CD4-positive, alpha-beta memory T cell (primary cell): ENCODE measurements at regions of chr3 and their contacts with region 1.

Region 1: DNA sequence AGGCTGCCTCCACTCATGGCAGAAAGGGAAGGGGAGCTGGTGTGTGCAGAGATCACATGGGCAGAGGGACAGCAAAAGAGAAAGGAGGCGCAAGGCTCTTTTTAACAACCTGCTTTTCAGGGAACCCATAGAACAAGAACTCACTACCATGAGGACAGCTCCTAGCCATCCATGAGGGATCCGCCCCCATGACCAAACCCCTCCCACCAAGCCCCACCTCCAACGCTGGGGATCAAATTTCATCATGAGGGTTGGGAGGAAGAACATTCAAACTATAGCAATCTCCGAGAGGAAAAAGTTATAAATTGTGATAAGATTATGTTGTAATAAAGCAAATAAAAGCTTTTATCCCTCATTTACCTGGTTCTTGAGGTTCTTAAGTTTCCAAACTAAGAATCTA is 84.7 kb upstream of the LMCD1 start:
- DNase-seq: no peak
- H3K4me3 ChIP-seq: no peak overlapping the region
- H3K4me3 Mint-ChIP-seq: peak overlapping the region in 1 of 8 donors; percentile 7
- H3K27ac ChIP-seq: no peak overlapping the region
- H3K27ac Mint-ChIP-seq: peak overlapping the region in 3 of 7 donors; percentile 39 to 77 (median 48)
- H3K4me1 ChIP-seq: peaks cover 8% of the 10 kb centered on the region
- H3K4me1 Mint-ChIP-seq: peaks cover 6 to 10% (median 6%) of the 10 kb centered on the region in 4 donors
- H3K27me3 ChIP-seq: no peaks in the 10 kb centered on the region
- H3K27me3 Mint-ChIP-seq: no peaks in the 10 kb centered on the region

Region 2: GRCh38 chr3:8239718-8240695 is 177.0 kb before region 1 on chr3:
- CTCF ChIA-PET with region 1: interaction called, 29 read pairs
- POLR2A ChIA-PET with region 1: no interaction called
- intact Hi-C with region 1: loop called (anchors 5 kb)
- DNase-seq: peak in 4 of 5 donors; percentile 6 to 22 (median 18)
- H3K4me3 ChIP-seq: no peak overlapping the region
- H3K4me3 Mint-ChIP-seq: no peak overlapping the region
- H3K27ac ChIP-seq: no peak overlapping the region
- H3K27ac Mint-ChIP-seq: peak overlapping the region in 1 of 7 donors; percentile 50
- H3K4me1 ChIP-seq: no peaks in the 10 kb centered on the region
- H3K4me1 Mint-ChIP-seq: no peaks in the 10 kb centered on the region
- H3K27me3 ChIP-seq: no peaks in the 10 kb centered on the region
- H3K27me3 Mint-ChIP-seq: peaks cover 0 to 2% of the 10 kb centered on the region in 2 donors

Region 3: DNA sequence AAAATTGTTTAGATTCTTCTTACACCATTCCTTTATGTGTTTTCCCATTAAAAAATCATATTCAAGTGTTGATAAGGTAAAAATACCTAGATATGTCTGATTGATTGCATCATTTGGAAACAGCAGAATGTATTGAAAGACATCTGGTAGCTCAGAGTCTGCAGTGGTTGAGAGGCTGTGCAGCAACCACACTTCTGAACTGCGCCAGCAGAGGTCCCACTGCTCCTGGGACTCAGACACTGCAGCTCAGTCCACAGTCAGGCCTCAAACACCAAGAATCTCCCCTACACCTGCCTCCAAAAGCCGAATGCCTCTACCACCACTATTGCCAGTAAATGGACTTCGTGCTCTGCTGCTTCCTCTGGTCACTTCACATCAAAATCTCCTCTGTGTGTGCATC is 92.2 kb before region 1 on chr3:
- CTCF ChIA-PET with region 1: interaction called, 391 read pairs
- POLR2A ChIA-PET with region 1: interaction called, 46 read pairs
- intact Hi-C with region 1: loop called (anchors 1 kb)
- DNase-seq: peak; percentile 50 to 65 (median 60)
- H3K4me3 ChIP-seq: no peak overlapping the region
- H3K4me3 Mint-ChIP-seq: no peak overlapping the region
- H3K27ac ChIP-seq: no peak overlapping the region
- H3K27ac Mint-ChIP-seq: peak overlapping the region in 3 of 7 donors; percentile 34 to 52 (median 43)
- H3K4me1 ChIP-seq: peaks cover 10% of the 10 kb centered on the region
- H3K4me1 Mint-ChIP-seq: peaks cover 21 to 24% (median 22%) of the 10 kb centered on the region in 4 donors
- H3K27me3 ChIP-seq: no peaks in the 10 kb centered on the region
- H3K27me3 Mint-ChIP-seq: no peaks in the 10 kb centered on the region

Region 4: DNA sequence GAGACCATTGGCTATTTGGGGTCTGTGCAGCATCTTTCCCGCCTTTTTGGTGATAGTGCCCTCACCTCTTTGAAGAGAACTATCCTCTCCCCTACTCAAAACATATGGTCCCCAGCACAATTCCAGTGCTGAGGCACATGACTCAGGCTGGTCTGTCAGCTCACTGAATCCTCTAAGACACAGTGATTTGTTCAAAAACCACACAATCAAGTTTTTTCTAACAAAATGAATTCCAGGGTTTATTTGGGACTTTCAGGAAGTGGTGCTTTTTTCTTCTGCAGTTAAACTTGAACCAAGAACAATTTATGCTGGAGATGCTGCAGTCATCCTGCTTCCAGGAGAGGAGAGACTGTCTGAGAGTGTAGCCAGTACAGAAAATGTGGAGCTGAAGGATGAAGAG is 57.8 kb before region 1 on chr3:
- CTCF ChIA-PET with region 1: interaction called, 12 read pairs
- POLR2A ChIA-PET with region 1: interaction called, 16 read pairs
- intact Hi-C with region 1: loop called (anchors 1 kb)
- DNase-seq: no peak
- H3K4me3 ChIP-seq: no peak overlapping the region
- H3K4me3 Mint-ChIP-seq: peak overlapping the region in 5 of 8 donors; percentile 50 to 71 (median 61)
- H3K27ac ChIP-seq: no peak overlapping the region
- H3K27ac Mint-ChIP-seq: peak overlapping the region in 6 of 7 donors; percentile 16 to 85 (median 64)
- H3K4me1 ChIP-seq: peaks cover 52% of the 10 kb centered on the region
- H3K4me1 Mint-ChIP-seq: peaks cover 30 to 62% (median 47%) of the 10 kb centered on the region in 4 donors
- H3K27me3 ChIP-seq: no peaks in the 10 kb centered on the region
- H3K27me3 Mint-ChIP-seq: peaks cover 0 to 2% of the 10 kb centered on the region in 2 donors

Region 5: GRCh38 chr3:8406177-8406878 is 10.6 kb before region 1 on chr3:
- CTCF ChIA-PET with region 1: interaction called, 23 read pairs
- POLR2A ChIA-PET with region 1: no interaction called
- intact Hi-C with region 1: no loop called
- DNase-seq: no peak
- H3K4me3 ChIP-seq: no peak overlapping the region
- H3K4me3 Mint-ChIP-seq: no peak overlapping the region
- H3K27ac ChIP-seq: no peak overlapping the region
- H3K27ac Mint-ChIP-seq: no peak overlapping the region
- H3K4me1 ChIP-seq: no peaks in the 10 kb centered on the region
- H3K4me1 Mint-ChIP-seq: no peaks in the 10 kb centered on the region
- H3K27me3 ChIP-seq: no peaks in the 10 kb centered on the region
- H3K27me3 Mint-ChIP-seq: peaks cover 3% of the 10 kb centered on the region in 2 donors